Sigmoid colon (tissue), 7 donors: ENCODE measurements at regions of chr15 and their contacts with region 1.

Region 1: DNA sequence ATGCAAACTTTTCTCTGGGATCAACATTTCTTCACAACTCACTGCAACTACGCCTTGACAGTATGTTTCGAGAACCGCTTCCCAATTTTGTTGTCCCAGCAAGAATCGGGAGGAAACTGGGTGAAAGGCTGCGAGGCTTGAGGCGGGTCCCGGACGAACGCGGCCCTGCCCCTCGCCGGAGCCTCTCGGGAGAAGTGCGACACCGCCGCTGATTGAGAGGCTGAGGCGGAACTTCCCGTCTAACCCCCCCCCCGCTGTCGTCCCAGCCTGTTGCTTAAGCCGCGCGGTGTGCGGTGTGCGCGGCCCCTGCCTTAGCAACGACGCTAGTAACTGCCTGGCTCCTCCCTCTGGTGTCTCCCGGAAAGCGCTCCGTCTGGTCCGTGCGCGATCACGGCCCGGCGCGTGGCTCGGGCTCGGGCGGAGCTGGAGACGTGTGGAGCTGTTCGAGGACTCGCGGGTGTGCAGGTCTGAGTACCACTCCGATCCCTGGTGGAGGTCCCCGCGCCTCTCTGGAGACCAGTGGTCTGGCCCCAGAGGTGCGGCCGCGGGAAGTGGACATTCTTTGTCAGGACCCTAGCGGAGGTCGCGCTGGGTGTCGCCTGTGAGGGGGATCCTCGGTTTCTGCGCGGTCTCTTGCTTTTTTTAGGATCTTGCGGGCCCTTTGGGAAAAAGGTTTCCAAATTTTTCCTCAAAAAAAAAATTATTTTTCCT is at the starts of genes DTWD1 and FAM227B:
- DNase-seq: peak; percentile 99
- H3K4me3 ChIP-seq: peak within 1 kb of the TSS; percentile 70 to 91 (median 76)
- H3K27ac ChIP-seq: peak within 1 kb of the TSS; percentile 90 to 94 (median 92)
- H3K4me1 ChIP-seq: peaks cover 0 to 35% (median 23%) of the 10 kb centered on the region in 4 donors
- H3K27me3 ChIP-seq: no peaks in the 10 kb centered on the region
- CTCF ChIP-seq: no peak
- EP300 ChIP-seq: peak in 1 of 4 donors; percentile 68
- POLR2A ChIP-seq: peak; percentile 84 to 92
- total RNA-seq, gene DTWD1: 22.7 to 39.8 (median 33.7) TPM
- total RNA-seq, gene FAM227B: 11.1 to 21.1 (median 15.0) TPM

Region 2: GRCh38 chr15:49155110-49155833 is 465.5 kb before region 1 on chr15 and contains the start of gene COPS2:
- intact Hi-C with region 1: loop called (anchors 10 kb)
- DNase-seq: peak; percentile 97
- H3K4me3 ChIP-seq: peak within 1 kb of the TSS; percentile 73 to 98 (median 88)
- H3K27ac ChIP-seq: peak within 1 kb of the TSS; percentile 86 to 97 (median 92)
- H3K4me1 ChIP-seq: peaks cover 0 to 48% (median 37%) of the 10 kb centered on the region in 4 donors
- H3K27me3 ChIP-seq: no peaks in the 10 kb centered on the region
- CTCF ChIP-seq: no peak
- EP300 ChIP-seq: peak in 2 of 4 donors; percentile 5 to 66
- POLR2A ChIP-seq: peak in 1 of 2 donors; percentile 38
- total RNA-seq, gene COPS2: 88.9 to 142 (median 98.5) TPM

Region 3: GRCh38 chr15:49421991-49422390 is 198.8 kb before region 1 on chr15:
- intact Hi-C with region 1: loop called (anchors 5 kb)
- DNase-seq: peak; percentile 76
- H3K4me3 ChIP-seq: peak overlapping the region; percentile 12 to 57 (median 52)
- H3K27ac ChIP-seq: peak overlapping the region; percentile 64 to 79 (median 77)
- H3K4me1 ChIP-seq: peaks cover 0 to 14% (median 4%) of the 10 kb centered on the region in 4 donors
- H3K27me3 ChIP-seq: no peaks in the 10 kb centered on the region
- CTCF ChIP-seq: peak; percentile 91 to 96 (median 94)
- EP300 ChIP-seq: no peak
- POLR2A ChIP-seq: no peak

Region 4: DNA sequence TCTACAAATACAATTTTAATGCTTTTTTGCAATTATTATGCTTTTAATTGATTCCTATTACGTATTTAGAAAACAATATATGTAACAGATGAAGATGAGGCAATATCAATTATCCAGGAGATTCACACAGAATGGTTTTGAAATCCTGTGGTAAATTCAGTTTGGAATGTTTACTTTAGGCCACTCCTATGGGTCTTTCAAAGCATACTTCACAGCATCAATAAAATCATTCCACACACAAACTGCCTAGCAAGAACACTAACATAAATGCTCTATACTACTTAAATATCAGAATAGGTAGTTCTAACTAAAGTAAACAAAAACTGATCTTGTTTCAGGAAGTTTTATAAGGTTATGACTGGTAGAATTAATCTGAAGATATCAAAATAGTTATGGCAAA is 90.7 kb before region 1 on chr15:
- intact Hi-C with region 1: no loop called
- DNase-seq: no peak
- H3K4me3 ChIP-seq: no peak overlapping the region
- H3K27ac ChIP-seq: no peak overlapping the region
- H3K4me1 ChIP-seq: no peaks in the 10 kb centered on the region
- H3K27me3 ChIP-seq: no peaks in the 10 kb centered on the region
- CTCF ChIP-seq: no peak
- EP300 ChIP-seq: no peak
- POLR2A ChIP-seq: no peak

Region 5: GRCh38 chr15:49573421-49573820 is 47.4 kb before region 1 on chr15:
- intact Hi-C with region 1: no loop called
- DNase-seq: no peak
- H3K4me3 ChIP-seq: no peak overlapping the region
- H3K27ac ChIP-seq: no peak overlapping the region
- H3K4me1 ChIP-seq: peaks cover 0 to 9% (median 3%) of the 10 kb centered on the region in 4 donors
- H3K27me3 ChIP-seq: no peaks in the 10 kb centered on the region
- CTCF ChIP-seq: no peak
- EP300 ChIP-seq: no peak
- POLR2A ChIP-seq: no peak

Region 6: DNA sequence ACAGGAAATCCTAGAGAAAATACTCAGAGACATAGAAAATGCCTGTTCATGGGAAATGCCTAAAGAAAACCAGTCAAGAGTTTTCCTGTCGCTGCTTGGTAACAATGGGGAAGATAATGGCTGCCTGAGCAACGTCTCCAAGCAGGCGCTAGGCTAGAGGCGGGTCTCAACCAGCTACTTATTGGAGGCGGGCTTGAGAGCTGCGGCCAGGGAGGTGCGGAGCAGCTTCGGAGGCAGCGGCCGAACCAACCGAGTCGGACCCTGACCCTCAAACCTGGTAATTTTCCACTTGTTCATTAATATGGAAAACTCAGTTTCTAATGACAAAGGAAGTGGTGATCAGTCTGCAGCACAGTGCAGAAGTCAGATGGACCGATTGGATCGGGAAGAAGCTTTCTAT is 173.1 kb after region 1 on chr15:
- intact Hi-C with region 1: no loop called
- DNase-seq: no peak
- H3K4me3 ChIP-seq: no peak overlapping the region
- H3K27ac ChIP-seq: no peak overlapping the region
- H3K4me1 ChIP-seq: no peaks in the 10 kb centered on the region
- H3K27me3 ChIP-seq: no peaks in the 10 kb centered on the region
- CTCF ChIP-seq: no peak
- EP300 ChIP-seq: no peak
- POLR2A ChIP-seq: no peak

Region 7: GRCh38 chr15:49876401-49877038 is 255.7 kb after region 1 on chr15:
- intact Hi-C with region 1: loop called (anchors 5 kb)
- DNase-seq: no peak
- H3K4me3 ChIP-seq: no peak overlapping the region
- H3K27ac ChIP-seq: peak overlapping the region; percentile 62 to 77 (median 74)
- H3K4me1 ChIP-seq: peaks cover 0 to 46% (median 42%) of the 10 kb centered on the region in 4 donors
- H3K27me3 ChIP-seq: no peaks in the 10 kb centered on the region
- CTCF ChIP-seq: peak in 2 of 4 experiments; percentile 27 to 45
- EP300 ChIP-seq: no peak
- POLR2A ChIP-seq: no peak

Region 8: DNA sequence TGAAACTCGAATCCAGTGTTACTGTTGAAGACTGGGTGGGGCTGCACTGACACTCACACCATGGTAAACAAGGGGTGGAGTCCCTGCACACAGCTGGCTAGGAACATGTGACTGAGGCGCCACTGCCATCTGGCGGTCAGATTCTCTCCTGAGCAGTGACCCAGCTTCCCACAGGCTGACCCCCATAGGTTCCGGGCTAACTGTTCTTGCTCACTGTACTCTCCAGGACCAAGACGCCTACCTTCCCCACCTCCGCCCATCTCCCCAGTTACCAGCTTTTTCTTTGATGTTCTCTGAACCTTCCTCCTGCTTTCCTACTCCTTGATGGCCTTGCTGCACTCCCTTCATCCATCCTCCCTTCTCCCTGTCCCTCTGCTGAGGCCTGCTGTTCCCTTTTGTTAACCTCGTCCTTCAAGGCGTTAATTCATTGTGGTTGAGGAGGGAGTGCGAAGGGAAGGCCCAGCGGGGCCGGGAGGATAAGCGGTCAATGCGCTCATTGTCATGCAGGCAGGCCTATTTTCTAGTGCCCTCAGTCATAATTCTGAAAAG is 383.0 kb after region 1 on chr15:
- intact Hi-C with region 1: loop called (anchors 2 kb)
- DNase-seq: peak; percentile 91
- H3K4me3 ChIP-seq: no peak overlapping the region
- H3K27ac ChIP-seq: peak overlapping the region in 3 of 4 donors; percentile 36 to 46 (median 37)
- H3K4me1 ChIP-seq: peaks cover 0 to 36% (median 24%) of the 10 kb centered on the region in 4 donors
- H3K27me3 ChIP-seq: no peaks in the 10 kb centered on the region
- CTCF ChIP-seq: peak; percentile 50 to 73 (median 58)
- EP300 ChIP-seq: no peak
- POLR2A ChIP-seq: no peak

Region 9: GRCh38 chr15:50134520-50135024 is 513.8 kb after region 1 on chr15:
- intact Hi-C with region 1: loop called (anchors 5 kb)
- DNase-seq: no peak
- H3K4me3 ChIP-seq: no peak overlapping the region
- H3K27ac ChIP-seq: peak overlapping the region; percentile 33 to 86 (median 57)
- H3K4me1 ChIP-seq: peaks cover 0 to 34% (median 20%) of the 10 kb centered on the region in 4 donors
- H3K27me3 ChIP-seq: no peaks in the 10 kb centered on the region
- CTCF ChIP-seq: no peak
- EP300 ChIP-seq: no peak
- POLR2A ChIP-seq: no peak